Gastrocnemius medialis (tissue), 4 donors: ENCODE measurements at regions of chr14 and their contacts with region 1.

Region 1: DNA sequence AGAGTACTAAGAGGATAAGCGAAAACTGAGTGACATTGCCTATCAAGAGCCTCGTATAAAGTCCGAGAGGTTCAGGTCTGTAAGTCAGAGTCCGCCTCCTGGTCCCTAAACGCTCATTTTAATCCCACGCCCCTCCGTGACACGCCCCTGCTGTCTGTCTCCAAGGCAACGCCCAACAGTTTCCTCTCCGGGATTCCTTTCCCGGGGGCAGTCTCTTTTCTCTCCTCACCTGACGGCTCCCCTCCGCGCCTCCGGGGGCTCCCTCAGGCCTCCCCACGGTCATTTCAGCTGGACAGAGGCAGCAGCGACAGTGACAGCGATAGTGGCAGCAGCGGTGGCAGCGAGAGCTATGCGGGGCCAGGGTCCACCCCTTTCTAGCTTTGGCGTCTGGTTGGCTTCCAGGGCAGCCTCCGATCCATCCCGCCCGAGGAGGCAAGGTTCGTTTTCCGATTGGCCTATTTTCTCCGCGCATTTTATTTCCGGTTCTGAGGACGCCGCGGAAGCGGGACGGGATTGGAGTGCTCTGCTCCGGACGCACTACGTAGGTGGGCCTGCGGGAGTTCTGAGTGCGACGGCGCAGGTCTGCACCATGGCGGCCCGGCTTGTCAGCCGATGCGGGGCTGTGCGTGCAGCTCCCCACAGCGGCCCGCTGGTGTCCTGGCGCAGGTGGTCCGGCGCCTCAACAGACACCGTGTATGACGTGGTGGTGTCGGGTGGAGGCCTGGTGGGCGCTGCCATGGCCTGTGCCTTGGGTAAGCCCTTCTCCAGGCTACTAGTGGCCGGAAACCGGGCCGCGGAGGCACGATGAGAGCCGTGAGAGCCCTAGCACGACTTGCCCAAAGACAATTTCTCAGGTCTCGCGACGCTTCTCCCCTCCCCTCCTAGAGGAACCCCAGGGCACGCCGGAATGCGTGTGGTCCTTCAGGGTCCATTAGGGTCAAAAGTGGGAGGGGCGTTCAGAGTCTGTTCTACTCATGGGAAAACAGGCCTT is at the starts of genes COQ6 and FAM161B:
- DNase-seq: peak; percentile 94 to 95
- ATAC-seq: peak; percentile 98
- H3K4me3 ChIP-seq: peak within 1 kb of the TSS; percentile 68 to 97 (median 94)
- H3K27ac ChIP-seq: peak within 1 kb of the TSS; percentile 90 to 98 (median 93)
- H3K4me1 ChIP-seq: peaks cover 9 to 21% of the 10 kb centered on the region in 2 donors
- H3K27me3 ChIP-seq: no peaks in the 10 kb centered on the region
- CTCF ChIP-seq: peak in 3 of 5 experiments; percentile 8 to 20 (median 16)
- POLR2A ChIP-seq: peak; percentile 79
- total RNA-seq, gene COQ6: 36.5 to 60.6 (median 42.2) TPM
- total RNA-seq, gene FAM161B: 5.0 to 7.7 (median 6.0) TPM

Region 2: DNA sequence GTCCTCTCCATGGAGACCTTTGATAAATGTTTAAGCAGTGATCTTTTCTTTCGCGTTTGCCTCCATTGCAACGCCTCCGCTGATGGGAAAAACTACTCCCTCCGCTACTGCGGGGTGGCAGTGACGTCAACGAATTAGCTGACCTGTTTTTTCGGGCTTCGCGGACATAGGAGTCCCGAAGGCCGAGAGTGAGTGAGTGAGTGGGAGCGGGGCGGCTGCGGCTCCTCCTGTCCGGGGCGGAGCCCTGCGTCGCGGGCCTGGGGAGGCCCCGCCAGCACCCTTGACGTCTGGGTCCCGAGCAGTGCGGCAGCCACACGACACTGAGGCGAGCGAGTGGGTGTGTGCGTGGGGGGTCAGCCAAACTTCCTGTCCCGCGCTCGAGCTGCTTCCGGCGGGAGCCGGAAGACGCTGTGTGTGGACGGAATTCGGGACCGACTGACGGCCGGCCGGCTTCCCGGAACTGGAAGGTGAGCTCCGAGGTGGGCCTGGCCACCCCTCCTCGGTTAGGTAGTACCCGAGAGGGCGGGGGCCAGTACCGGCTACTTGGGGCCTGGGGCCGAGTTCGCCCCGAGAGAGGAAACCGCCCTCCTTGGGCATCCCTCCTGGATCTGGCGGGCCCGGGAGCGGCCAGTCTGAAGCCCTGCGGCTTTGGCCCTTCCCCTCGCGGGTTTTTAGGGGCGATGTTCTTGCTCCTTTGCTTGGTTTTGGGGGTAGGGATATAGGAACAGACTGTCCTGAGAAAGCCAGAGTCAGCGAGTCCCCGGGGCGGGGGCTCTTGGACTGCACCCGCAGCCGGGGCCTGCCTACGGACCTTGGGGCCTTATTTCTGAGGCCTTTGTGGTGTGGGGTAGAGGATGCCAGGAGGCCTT is 63.4 kb before region 1 on chr14 and contains the start of gene ZNF410:
- in situ Hi-C with region 1: no loop called
- intact Hi-C with region 1: loop called (anchors 2 kb)
- DNase-seq: peak; percentile 92
- ATAC-seq: peak; percentile 95 to 96
- H3K4me3 ChIP-seq: peak within 1 kb of the TSS; percentile 79 to 100 (median 84)
- H3K27ac ChIP-seq: peak within 1 kb of the TSS; percentile 84 to 98 (median 92)
- H3K4me1 ChIP-seq: peaks cover 30 to 31% of the 10 kb centered on the region in 2 donors
- H3K27me3 ChIP-seq: no peaks in the 10 kb centered on the region
- CTCF ChIP-seq: peak in 1 of 5 experiments; percentile 11
- POLR2A ChIP-seq: peak; percentile 72 to 78
- total RNA-seq, gene ZNF410: 22.6 to 33.2 (median 24.0) TPM

Region 3: DNA sequence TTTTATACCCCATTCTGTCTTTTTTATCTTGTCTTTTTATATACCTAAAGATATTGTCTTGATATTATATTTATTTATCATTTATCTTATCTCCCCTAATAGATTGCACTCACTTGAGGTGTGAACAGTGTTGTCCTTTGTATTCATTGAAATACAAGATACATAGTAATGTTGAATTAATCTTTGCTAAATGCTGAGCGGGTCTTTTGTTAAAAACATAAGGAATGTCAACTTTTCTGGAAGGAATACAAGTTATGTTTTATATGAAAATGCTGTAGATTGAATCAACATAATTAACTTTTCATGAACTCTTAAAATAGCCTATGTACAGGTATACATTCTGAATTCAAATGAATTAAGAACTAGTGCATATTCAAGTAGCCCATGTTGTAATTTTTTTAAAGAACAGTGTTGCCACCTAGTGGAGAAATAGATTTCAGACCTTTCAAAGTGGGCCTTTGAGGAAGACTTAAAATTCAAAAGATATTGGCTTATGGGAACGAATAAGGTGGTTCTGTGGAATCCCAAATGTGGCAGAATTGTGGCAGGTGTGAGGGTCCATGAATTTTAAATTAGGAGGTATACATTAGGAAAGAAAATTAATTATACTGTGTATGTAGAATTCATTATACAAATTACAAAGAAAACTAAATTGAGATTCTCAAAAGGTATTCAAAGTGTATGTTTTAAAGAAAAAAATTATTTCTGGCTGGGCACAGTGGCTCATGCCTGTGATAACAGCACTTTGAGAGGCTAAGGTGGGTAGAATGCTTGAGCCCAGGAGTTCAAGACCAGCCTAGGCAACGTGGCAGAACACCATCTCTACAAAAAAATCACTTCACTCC is 88.2 kb after region 1 on chr14:
- in situ Hi-C with region 1: no loop called
- intact Hi-C with region 1: loop called (anchors 5 kb)
- DNase-seq: no peak
- ATAC-seq: peak; percentile 39 to 61
- H3K4me3 ChIP-seq: no peak overlapping the region
- H3K27ac ChIP-seq: no peak overlapping the region
- H3K4me1 ChIP-seq: no peaks in the 10 kb centered on the region
- H3K27me3 ChIP-seq: no peaks in the 10 kb centered on the region
- CTCF ChIP-seq: peak; percentile 29 to 69 (median 54)
- POLR2A ChIP-seq: no peak

Region 4: DNA sequence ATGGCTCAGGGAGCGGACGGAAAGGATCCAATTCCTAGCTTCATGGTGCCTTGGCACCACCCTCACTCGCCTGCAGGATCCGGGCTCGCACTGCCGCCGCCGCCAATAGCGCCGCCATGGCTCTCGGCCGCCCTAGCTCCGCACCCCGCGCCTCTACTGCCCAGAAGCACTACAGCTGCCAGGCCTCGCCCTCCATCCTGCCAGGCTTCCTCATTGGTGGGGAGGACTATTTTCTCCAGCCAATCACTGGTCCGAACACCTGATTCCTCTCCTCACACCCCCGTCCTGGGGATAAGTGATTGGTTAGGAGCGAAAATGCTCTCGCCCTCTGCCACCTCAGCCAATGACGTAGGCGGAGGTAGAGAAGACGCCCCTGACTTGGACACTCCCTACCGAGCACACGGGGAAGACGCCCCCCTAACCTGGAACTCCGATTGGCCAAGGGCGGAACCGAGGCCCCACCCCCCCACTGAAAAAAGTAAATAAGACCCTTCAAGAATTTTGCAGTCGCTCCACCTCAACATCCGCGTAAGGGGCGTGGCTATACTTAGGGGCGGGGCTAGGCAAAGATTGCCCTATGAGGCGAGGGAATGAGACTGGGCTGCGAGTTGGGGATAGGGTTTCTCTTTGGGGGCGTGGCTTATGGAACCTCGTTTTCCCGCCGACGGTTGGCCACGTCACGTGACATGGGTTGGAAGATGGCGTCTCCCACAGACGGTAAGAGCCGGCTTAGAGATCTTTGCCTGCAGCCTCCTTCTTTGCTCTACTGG is 134.4 kb after region 1 on chr14 and contains the starts of genes ALDH6A1 and LIN52:
- in situ Hi-C with region 1: no loop called
- intact Hi-C with region 1: loop called (anchors 2 kb)
- DNase-seq: peak; percentile 100
- ATAC-seq: peak; percentile 95 to 96
- H3K4me3 ChIP-seq: peak within 1 kb of the TSS; percentile 59 to 98 (median 84)
- H3K27ac ChIP-seq: peak within 1 kb of the TSS; percentile 88 to 96 (median 93)
- H3K4me1 ChIP-seq: peaks cover 26 to 39% of the 10 kb centered on the region in 2 donors
- H3K27me3 ChIP-seq: no peaks in the 10 kb centered on the region
- CTCF ChIP-seq: peak in 3 of 5 experiments; percentile 24 to 42 (median 27)
- POLR2A ChIP-seq: peak; percentile 95 to 96
- total RNA-seq, gene ALDH6A1: 5.9 to 26.3 (median 20.3) TPM
- total RNA-seq, gene LIN52: 3.4 to 5.6 (median 4.3) TPM